ENCODE measurements at regions of chrX and their contacts with region 1.

Region 1: GRCh38 chrX:109911046-109911445 is 91.9 kb upstream of the TMEM164 start:
- DNase-seq: no peak
- ATAC-seq: no peak; the same call in 1 of the 2 replicates
- H3K4me3 ChIP-seq: no peak overlapping the region
- H3K27ac ChIP-seq: no peak overlapping the region
- H3K4me1 ChIP-seq: no peaks in the 10 kb centered on the region
- H3K27me3 ChIP-seq: peaks cover 4% of the 10 kb centered on the region; the same call in 1 of the 2 replicates
- CTCF ChIP-seq: peak; percentile 51
- POLR2A ChIP-seq: no peak
- RAD21 ChIP-seq: 0 out of 2 replicates have a peak, but pooled peaks have one; percentile 22

Region 2: DNA sequence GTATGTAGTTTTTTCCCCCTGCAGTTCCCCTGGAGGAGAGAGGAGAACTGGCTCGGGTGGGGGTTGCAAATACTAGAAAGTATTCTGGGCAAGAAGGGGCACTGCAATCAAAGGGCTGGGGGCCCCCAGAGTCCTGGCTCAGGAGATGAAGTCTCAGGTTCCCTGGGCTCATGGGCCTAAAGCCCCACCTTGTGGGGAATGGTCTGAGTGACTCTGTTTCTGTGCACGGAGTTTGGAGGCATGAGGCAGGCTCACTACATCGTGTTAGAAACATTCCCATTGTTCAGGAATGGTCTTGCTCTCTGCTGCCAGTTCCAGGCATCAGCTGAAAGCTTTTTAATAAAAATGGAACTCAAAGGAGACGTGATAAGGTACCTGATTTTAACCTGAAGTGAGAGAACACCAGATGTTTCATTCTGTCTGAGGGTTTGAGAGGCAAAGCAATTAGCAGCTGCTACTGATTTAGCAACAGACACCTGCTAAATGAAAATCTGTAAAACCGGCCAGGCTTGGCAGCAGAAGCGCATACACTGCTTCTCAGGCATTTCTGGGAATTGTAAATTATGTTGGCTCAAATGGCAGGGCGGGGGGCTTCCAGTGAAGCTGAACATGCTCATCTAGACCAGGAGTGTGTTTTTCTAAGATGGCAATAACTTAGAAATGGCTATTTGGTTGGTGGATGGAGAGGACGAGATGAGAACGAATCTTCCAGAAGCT is 214.6 kb after region 1 on chrX:
- CTCF ChIA-PET with region 1: no interaction called
- POLR2A ChIA-PET with region 1: no interaction called
- dilution Hi-C with region 1: no loop called
- in situ Hi-C with region 1: no loop called
- intact Hi-C with region 1: loop called (anchors 1 kb)
- DNase-seq: peak; percentile 12
- ATAC-seq: peak; percentile 51
- H3K4me3 ChIP-seq: no peak overlapping the region
- H3K27ac ChIP-seq: no peak overlapping the region
- H3K4me1 ChIP-seq: no peaks in the 10 kb centered on the region
- H3K27me3 ChIP-seq: no peaks in the 10 kb centered on the region; the same call in 1 of the 2 replicates
- CTCF ChIP-seq: peak; percentile 44
- POLR2A ChIP-seq: no peak
- RAD21 ChIP-seq: peak; percentile 45

Region 3: GRCh38 chrX:110418316-110419235 is 507.5 kb after region 1 on chrX:
- CTCF ChIA-PET with region 1: no interaction called
- POLR2A ChIA-PET with region 1: no interaction called
- dilution Hi-C with region 1: no loop called
- in situ Hi-C with region 1: loop called (anchors 25 kb)
- intact Hi-C with region 1: loop called (anchors 5 kb)
- DNase-seq: peak; percentile 86
- ATAC-seq: peak; percentile 77
- H3K4me3 ChIP-seq: no peak overlapping the region; the same call in 1 of the 2 replicates
- H3K27ac ChIP-seq: peak overlapping the region; percentile 72
- H3K4me1 ChIP-seq: peaks cover 11% of the 10 kb centered on the region
- H3K27me3 ChIP-seq: 0 out of 2 replicates have a peak, but pooled peaks cover 3% of the 10 kb centered on the region
- CTCF ChIP-seq: peak; percentile 60
- POLR2A ChIP-seq: no peak
- RAD21 ChIP-seq: peak; percentile 72

Measured in IMR-90 (cell line).